BJ (cell line): ENCODE measurements at regions of chr10 and their contacts with region 1.

Region 1: DNA sequence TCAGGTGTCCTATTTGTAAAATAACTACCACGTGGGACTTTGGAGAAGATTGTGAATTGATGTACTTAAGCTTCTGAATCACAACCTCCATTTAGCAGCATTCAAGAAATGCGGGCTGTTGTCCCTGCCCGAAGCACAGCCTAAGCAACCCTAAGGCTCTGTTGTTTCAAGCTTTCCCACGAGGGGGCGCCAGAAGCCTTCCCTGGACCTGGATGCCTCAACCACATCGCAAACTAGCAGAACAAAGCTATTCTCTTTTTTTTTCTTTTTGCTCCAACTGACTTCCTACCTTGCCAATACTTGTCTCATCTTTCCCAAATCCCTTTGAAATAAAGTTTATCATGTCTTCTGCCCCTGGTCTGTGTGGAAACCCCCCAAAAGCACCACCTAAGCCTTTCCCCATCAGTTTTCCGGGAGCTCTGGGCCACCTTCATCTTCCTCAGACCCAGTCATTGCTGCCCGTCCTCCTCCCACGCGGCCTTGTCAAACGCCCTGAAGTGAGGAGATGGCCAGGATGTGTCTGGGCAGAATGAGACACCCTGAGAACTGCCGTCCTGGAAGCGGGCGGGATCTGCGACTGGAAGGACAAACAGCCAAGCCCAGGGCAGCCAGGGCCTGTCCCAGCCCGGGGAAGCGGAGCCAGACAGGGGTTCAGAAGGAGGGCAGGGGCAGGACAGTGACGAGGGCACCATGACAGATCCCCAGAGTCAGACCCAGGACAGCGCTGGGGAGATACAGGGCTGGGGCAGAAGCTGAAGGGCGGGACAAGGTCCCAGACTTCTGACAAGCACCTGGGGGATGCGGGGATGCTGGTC is 112.7 kb downstream of the SLIT1 start:
- DNase-seq: peak; percentile 9
- H3K4me3 ChIP-seq: no peak overlapping the region
- H3K27me3 ChIP-seq: peaks cover 9% of the 10 kb centered on the region
- CTCF ChIP-seq: peak; percentile 95

Region 2: GRCh38 chr10:95350219-95350829 is 1722.7 kb before region 1 on chr10:
- CTCF ChIA-PET with region 1: no interaction called
- POLR2A ChIA-PET with region 1: no interaction called
- DNase-seq: no peak
- H3K4me3 ChIP-seq: no peak overlapping the region
- H3K27me3 ChIP-seq: peaks cover 2% of the 10 kb centered on the region
- CTCF ChIP-seq: no peak

Region 3: DNA sequence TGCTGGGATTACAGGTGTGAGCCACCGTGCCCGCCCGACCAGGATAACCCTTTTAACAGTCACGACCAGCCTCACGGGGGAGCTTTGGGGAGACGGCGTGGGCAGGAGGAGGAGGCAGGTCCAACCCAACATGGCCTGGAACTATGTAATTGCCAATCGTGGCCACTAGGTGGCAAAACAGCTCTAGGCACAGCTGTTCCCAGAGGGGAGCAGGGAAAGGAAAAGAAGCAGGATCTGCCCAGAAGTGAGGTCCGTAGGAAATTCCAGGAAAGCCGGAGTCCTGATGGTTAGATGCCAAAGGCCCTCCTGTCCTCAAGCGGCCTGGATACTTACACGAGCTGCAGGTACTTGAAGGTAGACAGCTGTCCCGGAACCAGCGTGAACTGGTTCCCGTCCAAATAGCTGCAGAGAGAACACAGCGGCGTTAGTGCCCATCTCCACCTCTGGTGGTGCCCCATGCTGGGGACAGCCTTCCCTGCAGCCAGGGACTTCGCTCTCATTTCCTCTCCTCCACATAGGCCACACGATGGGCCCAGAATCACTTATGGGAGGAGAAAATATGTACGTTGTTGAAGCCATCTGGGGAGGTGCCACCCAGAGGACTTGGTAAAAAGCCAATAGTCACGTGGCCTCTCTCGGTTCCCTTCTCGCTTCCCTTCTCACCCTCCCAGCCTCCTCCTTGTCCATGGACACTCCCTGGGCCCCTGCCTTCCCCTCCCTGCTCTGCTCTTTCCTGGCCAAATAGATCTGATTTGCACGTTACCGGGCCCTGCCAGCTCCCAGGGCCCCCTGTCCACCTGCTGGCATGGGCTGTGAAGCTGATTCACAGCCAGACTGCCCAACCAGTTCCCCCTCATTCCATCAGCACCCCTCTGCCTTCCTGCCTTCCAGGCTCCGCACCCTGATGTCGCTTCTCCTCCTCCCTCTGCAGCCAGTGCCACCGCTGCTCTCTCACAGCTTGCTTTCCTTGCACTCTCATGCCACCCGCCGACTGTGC is 35.4 kb before region 1 on chr10:
- CTCF ChIA-PET with region 1: interaction called, 21 read pairs
- POLR2A ChIA-PET with region 1: no interaction called
- DNase-seq: peak; percentile 18
- H3K4me3 ChIP-seq: peak overlapping the region; percentile 36
- H3K27me3 ChIP-seq: peaks cover 19% of the 10 kb centered on the region
- CTCF ChIP-seq: peak; percentile 90

Region 4: GRCh38 chr10:97089209-97089870 is 16.3 kb after region 1 on chr10:
- CTCF ChIA-PET with region 1: interaction called, 17 read pairs
- POLR2A ChIA-PET with region 1: no interaction called
- DNase-seq: no peak
- H3K4me3 ChIP-seq: no peak overlapping the region
- H3K27me3 ChIP-seq: peaks cover 7% of the 10 kb centered on the region
- CTCF ChIP-seq: no peak

Region 5: GRCh38 chr10:97210543-97210961 is 137.5 kb after region 1 on chr10:
- CTCF ChIA-PET with region 1: interaction called, 188 read pairs
- POLR2A ChIA-PET with region 1: interaction called, 3 read pairs
- DNase-seq: no peak
- H3K4me3 ChIP-seq: no peak overlapping the region
- H3K27me3 ChIP-seq: no peaks in the 10 kb centered on the region
- CTCF ChIP-seq: peak; percentile 95

Region 6: DNA sequence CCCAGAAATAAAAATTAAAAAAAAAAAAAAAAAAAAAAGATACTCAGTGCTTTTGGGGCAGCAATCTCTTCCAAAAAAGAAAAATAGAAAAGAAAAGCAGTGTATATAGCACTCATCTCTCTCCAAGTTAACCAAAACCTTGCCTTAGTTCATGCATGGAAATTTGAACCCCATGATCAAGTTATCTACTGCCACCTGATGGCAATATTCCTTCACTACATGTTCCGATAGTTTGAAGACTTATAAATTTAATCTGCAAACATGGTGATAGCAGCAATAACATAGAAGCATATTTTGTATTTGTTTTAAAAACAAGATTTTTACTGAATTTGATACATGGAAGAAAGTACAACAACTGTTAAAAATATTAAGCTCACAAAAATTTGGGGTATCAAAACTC is 161.3 kb after region 1 on chr10:
- CTCF ChIA-PET with region 1: interaction called, 45 read pairs
- POLR2A ChIA-PET with region 1: no interaction called
- DNase-seq: no peak
- H3K4me3 ChIP-seq: no peak overlapping the region
- H3K27me3 ChIP-seq: no peaks in the 10 kb centered on the region
- CTCF ChIP-seq: peak; percentile 60